Posterior cingulate gyrus (tissue), 11 donors: ENCODE measurements at regions of chrX and their contacts with region 1.

Region 1: DNA sequence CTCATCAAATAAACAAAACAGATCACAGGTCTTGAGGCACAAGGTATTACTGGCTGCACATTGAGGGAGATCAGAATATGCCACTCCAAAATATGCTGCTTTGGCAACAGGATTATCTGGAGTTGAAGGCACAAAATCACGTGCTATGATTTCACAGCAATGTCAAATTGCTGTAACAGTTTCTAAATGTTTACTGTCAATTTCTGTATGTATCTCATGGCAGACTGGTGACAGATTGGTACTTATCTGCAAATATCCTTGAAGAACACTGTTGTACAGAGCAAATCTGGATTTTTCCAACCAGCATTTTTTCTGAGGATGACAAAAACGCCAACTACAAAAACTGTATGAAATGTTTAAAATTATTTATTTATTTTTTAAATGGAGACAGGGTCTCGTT is 26.7 kb downstream of the GPR82 start:
- DNase-seq: no peak

Region 2: DNA sequence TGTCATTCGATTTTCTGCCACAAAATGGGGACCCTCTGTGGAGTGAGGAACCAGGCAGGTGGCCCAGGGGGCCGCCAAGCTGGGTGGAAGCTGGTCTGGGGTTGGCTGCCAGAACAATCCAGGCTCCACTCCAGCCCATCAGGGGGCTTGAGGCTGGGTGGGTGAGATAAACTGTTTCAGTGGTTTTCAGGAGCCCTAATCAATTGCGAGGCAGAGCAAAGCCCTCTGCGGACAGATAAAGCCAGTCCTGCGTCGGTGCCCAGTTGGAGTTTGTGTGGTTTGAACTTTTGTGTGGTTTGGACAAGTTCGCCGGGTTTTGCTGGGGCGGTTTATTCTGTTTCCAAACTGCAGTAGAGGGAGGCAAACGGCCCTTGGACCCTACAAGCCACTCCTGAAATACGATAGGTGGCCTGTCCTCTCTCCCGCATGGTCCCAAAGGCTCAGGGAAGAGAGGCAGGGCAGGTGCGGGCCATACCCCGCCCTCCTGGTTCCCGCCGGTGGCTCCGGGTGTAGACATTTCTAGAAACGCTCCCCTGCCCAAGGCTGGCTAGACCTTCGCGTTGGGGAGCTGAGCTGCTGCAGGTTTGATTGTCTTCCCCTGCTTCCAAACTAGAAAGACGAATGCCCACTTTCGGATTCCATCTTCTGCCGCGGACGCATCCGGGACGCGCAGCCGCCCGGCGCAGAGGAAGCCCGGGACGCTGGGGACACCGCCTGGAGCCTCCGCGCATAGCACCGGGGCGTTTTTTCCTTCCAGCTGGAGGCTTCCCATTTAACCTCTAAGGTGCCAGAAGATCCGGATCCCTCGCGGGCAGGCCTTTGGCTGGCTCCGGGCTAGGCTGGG is 1484.0 kb before region 1 on chrX:
- intact Hi-C with region 1: no loop called
- DNase-seq: peak; percentile 50 to 95 (median 67)

Region 3: GRCh38 chrX:41688835-41689234 is 61.9 kb before region 1 on chrX and contains the start of gene GPR34:
- intact Hi-C with region 1: loop called (anchors 5 kb)
- DNase-seq: no peak

Region 4: DNA sequence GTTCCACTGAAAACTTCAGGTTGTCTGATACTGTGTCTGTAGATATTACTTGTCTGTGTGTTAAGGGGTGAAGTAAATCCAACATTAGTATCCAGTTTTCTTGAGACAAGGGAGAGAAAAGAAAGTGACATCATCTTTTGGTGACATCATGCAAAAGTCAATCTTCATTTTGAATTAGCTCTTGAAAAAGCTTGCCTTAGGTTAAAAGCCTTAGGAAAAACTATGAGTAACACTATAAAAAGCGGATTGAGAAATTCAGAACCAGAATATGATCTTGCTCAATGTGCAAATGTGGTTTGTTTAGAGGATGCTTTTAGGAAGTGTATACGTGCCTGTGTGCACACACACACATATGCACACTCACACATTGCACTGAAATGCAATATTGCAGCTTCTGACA is 518.5 kb after region 1 on chrX:
- intact Hi-C with region 1: no loop called
- DNase-seq: no peak